HepG2 (cell line): ENCODE measurements at regions of chr17 and their contacts with region 1.

Region 1: GRCh38 chr17:45428050-45428617 is 4.5 kb downstream of the ARHGAP27 start:
- DNase-seq: peak; percentile 67
- ATAC-seq: peak; percentile 33
- H3K4me3 ChIP-seq: peak overlapping the region; percentile 18 to 66 (median 48)
- H3K27ac ChIP-seq: no peak overlapping the region
- H3K4me1 ChIP-seq: peaks cover 72% of the 10 kb centered on the region
- H3K27me3 ChIP-seq: peaks cover 2 to 42% of the 10 kb centered on the region in 2 experiments; a peak in 4 of 5 replicates
- CTCF ChIP-seq: peak; percentile 100
- EP300 ChIP-seq: no peak
- POLR2A ChIP-seq: no peak
- RAD21 ChIP-seq: peak; percentile 89

Region 2: GRCh38 chr17:45051060-45051719 is 376.9 kb before region 1 on chr17 and contains the start of gene DCAKD:
- CTCF ChIA-PET with region 1: no interaction called
- POLR2A ChIA-PET with region 1: no interaction called
- in situ Hi-C with region 1: no loop called
- intact Hi-C with region 1: loop called (anchors 5 kb)
- DNase-seq: peak; percentile 92
- ATAC-seq: peak; percentile 99
- H3K4me3 ChIP-seq: peak within 1 kb of the TSS; percentile 81 to 89 (median 84)
- H3K27ac ChIP-seq: peak within 1 kb of the TSS; percentile 94
- H3K4me1 ChIP-seq: peaks cover 59% of the 10 kb centered on the region
- H3K27me3 ChIP-seq: no peaks in the 10 kb centered on the region; a peak in 1 of 5 replicates
- CTCF ChIP-seq: no peak
- EP300 ChIP-seq: no peak
- POLR2A ChIP-seq: peak; percentile 75 to 76
- RAD21 ChIP-seq: peak; percentile 58; the same call in 1 of the 2 replicates
- total RNA-seq, gene DCAKD: 29.2 and 31.1 TPM in 2 replicates

Region 3: DNA sequence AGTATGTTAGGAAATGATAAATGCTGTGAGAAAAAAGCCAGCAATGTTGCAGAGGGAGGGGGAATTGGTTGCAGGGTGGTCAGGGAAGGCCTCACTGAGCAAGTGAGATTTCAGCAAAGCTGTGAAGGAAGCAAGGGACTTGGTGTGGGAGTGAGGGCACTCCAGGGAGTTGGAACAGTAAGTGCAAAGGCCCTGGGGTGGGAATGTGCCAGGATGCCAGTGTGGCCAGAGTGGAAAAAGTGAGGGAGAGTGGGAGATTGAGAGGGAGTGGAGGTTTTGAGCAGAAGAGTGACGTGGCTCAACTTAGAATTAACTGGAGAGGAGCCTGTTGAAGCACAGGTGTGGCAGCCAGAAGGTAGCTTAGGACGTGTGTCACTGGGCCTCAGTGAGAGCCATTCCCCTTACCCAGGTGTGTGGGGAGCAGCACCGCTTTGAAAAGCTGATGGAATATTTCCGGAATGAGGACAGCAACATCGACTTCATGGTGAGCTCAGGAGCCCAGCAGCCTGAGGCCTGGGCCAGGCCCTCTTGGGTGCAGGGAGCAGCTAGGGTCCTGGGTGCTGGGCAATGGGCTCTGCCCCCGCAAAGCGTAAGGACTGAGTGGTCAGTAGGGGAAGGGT is 189.9 kb before region 1 on chr17:
- CTCF ChIA-PET with region 1: no interaction called
- POLR2A ChIA-PET with region 1: no interaction called
- in situ Hi-C with region 1: no loop called
- intact Hi-C with region 1: no loop called
- DNase-seq: no peak
- ATAC-seq: no peak
- H3K4me3 ChIP-seq: no peak overlapping the region
- H3K27ac ChIP-seq: no peak overlapping the region
- H3K4me1 ChIP-seq: no peaks in the 10 kb centered on the region
- H3K27me3 ChIP-seq: peaks cover 13 to 52% of the 10 kb centered on the region in 2 experiments
- CTCF ChIP-seq: no peak
- EP300 ChIP-seq: no peak
- POLR2A ChIP-seq: no peak
- RAD21 ChIP-seq: no peak

Region 4: DNA sequence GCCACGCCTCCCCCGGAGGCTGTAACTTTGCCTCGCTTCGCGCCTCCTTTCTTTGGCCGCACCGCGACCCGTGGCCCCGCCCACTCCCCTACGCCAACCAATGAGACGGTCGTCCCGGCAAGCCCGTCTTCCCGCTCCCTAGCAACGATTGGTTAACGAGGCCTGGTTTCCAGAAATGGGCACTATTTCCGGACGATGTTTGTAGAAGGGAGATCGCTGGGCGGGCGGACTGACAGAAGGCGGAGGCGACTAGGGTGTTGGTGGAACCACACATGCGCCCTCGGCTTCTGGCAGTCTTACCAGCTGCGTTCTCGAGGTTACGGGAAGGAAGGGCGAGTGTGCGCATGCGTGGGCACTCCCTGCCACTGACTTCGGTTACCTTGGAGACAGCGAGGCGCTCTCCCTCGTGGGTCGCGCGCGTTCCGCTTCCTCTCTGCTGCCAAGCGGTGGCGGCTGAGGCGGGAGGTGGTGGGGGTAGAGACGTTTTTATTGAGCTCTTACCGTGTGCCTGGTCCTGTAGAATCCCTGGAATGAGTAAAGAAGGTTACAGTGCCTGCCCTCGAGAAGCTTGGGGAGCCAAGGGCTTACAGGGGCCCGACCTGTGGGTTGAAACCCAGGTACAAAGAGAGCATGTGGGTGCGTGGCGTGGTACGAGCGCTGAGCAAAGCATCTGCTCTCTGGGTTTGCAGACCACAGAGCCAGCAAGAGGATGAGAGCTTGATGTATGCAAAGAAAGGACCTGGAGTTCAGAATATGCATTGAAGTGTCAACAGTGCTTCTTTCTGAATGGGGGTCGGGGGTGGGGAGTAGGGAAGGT is 110.8 kb before region 1 on chr17:
- CTCF ChIA-PET with region 1: no interaction called
- POLR2A ChIA-PET with region 1: interaction called, 18 read pairs
- in situ Hi-C with region 1: no loop called
- intact Hi-C with region 1: no loop called
- DNase-seq: peak; percentile 100
- ATAC-seq: peak; percentile 88
- H3K4me3 ChIP-seq: peak overlapping the region; percentile 43 to 86 (median 67)
- H3K27ac ChIP-seq: peak overlapping the region; percentile 47
- H3K4me1 ChIP-seq: peaks cover 59% of the 10 kb centered on the region
- H3K27me3 ChIP-seq: peaks cover 2 to 36% of the 10 kb centered on the region in 2 experiments; a peak in 3 of 5 replicates
- CTCF ChIP-seq: peak; percentile 37
- EP300 ChIP-seq: no peak; a peak in 1 of 4 replicates
- POLR2A ChIP-seq: peak in 1 of 2 experiments; percentile 24; a peak in 1 of 4 replicates
- RAD21 ChIP-seq: 0 out of 2 replicates have a peak, but pooled peaks have one; percentile 28

Region 5: GRCh38 chr17:45364531-45365390 is 63.4 kb before region 1 on chr17:
- CTCF ChIA-PET with region 1: no interaction called
- POLR2A ChIA-PET with region 1: no interaction called
- in situ Hi-C with region 1: no loop called
- intact Hi-C with region 1: no loop called
- DNase-seq: no peak
- ATAC-seq: peak; percentile 67
- H3K4me3 ChIP-seq: no peak overlapping the region
- H3K27ac ChIP-seq: no peak overlapping the region
- H3K4me1 ChIP-seq: no peaks in the 10 kb centered on the region
- H3K27me3 ChIP-seq: peaks cover 2 to 23% of the 10 kb centered on the region in 2 experiments; a peak in 2 of 5 replicates
- CTCF ChIP-seq: no peak
- EP300 ChIP-seq: no peak
- POLR2A ChIP-seq: no peak
- RAD21 ChIP-seq: no peak

Region 6: DNA sequence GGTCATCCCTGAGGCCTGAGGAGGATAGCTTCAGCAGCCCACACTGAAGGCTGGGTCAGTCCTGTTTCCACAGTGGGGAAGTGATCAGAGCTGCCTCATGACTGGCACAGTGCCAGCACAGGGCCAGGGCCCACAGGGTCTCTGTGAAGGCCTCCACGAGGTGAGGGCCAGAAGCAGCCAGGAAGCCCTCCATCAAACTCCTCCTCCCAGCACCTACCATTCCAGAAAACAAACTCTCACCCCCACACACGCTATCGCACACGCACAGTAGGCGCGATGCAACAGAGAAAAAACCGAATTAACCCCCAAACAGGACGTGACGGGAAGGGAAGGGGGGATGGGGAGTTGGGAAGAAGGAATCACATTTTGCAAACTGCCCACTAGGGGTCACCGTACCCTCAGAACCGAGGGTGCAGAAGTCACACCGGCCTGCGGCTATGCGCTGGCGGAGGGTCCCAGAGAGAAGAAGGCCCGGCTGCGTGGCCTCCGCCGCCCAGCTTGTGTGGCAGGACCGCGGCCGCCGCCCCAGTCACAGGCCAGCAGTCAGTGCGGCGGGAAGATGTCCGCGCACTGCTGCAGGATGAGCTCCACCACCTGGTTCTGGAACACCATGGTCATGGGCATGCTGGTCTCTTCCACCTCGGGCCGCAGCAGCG is 33.1 kb before region 1 on chr17:
- CTCF ChIA-PET with region 1: interaction called, 27 read pairs
- POLR2A ChIA-PET with region 1: interaction called, 11 read pairs
- in situ Hi-C with region 1: no loop called
- intact Hi-C with region 1: loop called (anchors 1 kb)
- DNase-seq: peak; percentile 72
- ATAC-seq: peak; percentile 73
- H3K4me3 ChIP-seq: no peak overlapping the region
- H3K27ac ChIP-seq: no peak overlapping the region
- H3K4me1 ChIP-seq: peaks cover 7% of the 10 kb centered on the region; the same call in 1 of the 2 replicates
- H3K27me3 ChIP-seq: peaks cover 0 to 2% of the 10 kb centered on the region in 2 experiments; a peak in 1 of 5 replicates
- CTCF ChIP-seq: peak; percentile 97
- EP300 ChIP-seq: no peak
- POLR2A ChIP-seq: no peak
- RAD21 ChIP-seq: peak; percentile 96

Region 7: GRCh38 chr17:45410144-45411091 is 17.7 kb before region 1 on chr17:
- CTCF ChIA-PET with region 1: interaction called, 3 read pairs
- POLR2A ChIA-PET with region 1: interaction called, 79 read pairs
- in situ Hi-C with region 1: no loop called
- intact Hi-C with region 1: loop called (anchors 1 kb)
- DNase-seq: no peak
- ATAC-seq: no peak
- H3K4me3 ChIP-seq: no peak overlapping the region
- H3K27ac ChIP-seq: no peak overlapping the region
- H3K4me1 ChIP-seq: peaks cover 73% of the 10 kb centered on the region
- H3K27me3 ChIP-seq: no peaks in the 10 kb centered on the region
- CTCF ChIP-seq: no peak
- EP300 ChIP-seq: no peak
- POLR2A ChIP-seq: no peak
- RAD21 ChIP-seq: no peak